ENCODE measurements at regions of chr4 and their contacts with region 1.

Region 1: DNA sequence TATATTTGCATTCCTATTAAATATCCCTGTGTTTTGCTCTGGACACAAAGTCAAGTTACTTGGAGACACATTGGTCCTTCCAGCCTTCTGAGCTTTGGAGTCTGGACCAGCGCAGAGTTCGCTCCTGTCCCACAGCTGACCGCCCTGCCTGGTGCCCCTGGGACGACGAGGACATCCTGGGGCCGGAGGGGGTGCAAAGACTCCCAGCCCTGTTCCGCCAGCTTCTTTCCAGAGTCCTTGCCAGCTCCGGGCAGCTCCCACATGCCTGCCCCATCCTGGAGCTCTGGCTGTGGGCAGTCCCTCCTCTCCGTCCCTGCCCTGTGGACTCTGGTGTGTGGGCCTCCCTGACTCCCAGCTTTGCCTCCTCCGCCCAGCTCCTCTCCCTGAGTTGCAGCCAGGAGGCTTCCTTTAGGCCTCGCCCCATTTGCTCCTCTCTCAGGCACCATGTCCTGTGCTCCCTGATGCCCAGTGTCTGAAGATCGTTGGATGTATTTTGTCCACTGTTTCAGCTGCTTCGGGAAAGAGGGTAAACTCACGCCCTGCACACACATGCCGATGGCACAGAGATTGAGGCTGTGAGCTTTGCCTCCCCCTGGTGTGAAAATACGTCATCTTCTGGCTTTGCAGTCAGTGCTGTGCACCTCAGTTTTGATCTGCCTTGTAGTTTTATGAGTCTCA is 4.9 kb upstream of the PCGF3 start:
- DNase-seq: no peak
- ATAC-seq: no peak
- H3K4me3 ChIP-seq: no peak overlapping the region
- H3K27ac ChIP-seq: no peak overlapping the region
- H3K4me1 ChIP-seq: peaks cover 5% of the 10 kb centered on the region; the same call in 1 of the 2 replicates
- H3K27me3 ChIP-seq: peaks cover 8% of the 10 kb centered on the region
- CTCF ChIP-seq: no peak
- POLR2A ChIP-seq: no peak
- RAD21 ChIP-seq: no peak

Region 2: GRCh38 chr4:422587-422986 is 278.1 kb before region 1 on chr4:
- CTCF ChIA-PET with region 1: no interaction called
- POLR2A ChIA-PET with region 1: no interaction called
- dilution Hi-C with region 1: no loop called
- in situ Hi-C with region 1: no loop called
- intact Hi-C with region 1: no loop called
- DNase-seq: no peak
- ATAC-seq: no peak
- H3K4me3 ChIP-seq: no peak overlapping the region
- H3K27ac ChIP-seq: no peak overlapping the region
- H3K4me1 ChIP-seq: no peaks in the 10 kb centered on the region
- H3K27me3 ChIP-seq: no peaks in the 10 kb centered on the region
- CTCF ChIP-seq: no peak
- POLR2A ChIP-seq: no peak
- RAD21 ChIP-seq: no peak

Region 3: GRCh38 chr4:575281-576141 is 125.2 kb before region 1 on chr4:
- CTCF ChIA-PET with region 1: no interaction called
- POLR2A ChIA-PET with region 1: no interaction called
- dilution Hi-C with region 1: no loop called
- in situ Hi-C with region 1: no loop called
- intact Hi-C with region 1: no loop called
- DNase-seq: peak; percentile 44
- ATAC-seq: peak; percentile 88
- H3K4me3 ChIP-seq: no peak overlapping the region
- H3K27ac ChIP-seq: no peak overlapping the region
- H3K4me1 ChIP-seq: no peaks in the 10 kb centered on the region; the same call in 1 of the 2 replicates
- H3K27me3 ChIP-seq: peaks cover 58% of the 10 kb centered on the region
- CTCF ChIP-seq: no peak
- POLR2A ChIP-seq: no peak
- RAD21 ChIP-seq: no peak

Region 4: DNA sequence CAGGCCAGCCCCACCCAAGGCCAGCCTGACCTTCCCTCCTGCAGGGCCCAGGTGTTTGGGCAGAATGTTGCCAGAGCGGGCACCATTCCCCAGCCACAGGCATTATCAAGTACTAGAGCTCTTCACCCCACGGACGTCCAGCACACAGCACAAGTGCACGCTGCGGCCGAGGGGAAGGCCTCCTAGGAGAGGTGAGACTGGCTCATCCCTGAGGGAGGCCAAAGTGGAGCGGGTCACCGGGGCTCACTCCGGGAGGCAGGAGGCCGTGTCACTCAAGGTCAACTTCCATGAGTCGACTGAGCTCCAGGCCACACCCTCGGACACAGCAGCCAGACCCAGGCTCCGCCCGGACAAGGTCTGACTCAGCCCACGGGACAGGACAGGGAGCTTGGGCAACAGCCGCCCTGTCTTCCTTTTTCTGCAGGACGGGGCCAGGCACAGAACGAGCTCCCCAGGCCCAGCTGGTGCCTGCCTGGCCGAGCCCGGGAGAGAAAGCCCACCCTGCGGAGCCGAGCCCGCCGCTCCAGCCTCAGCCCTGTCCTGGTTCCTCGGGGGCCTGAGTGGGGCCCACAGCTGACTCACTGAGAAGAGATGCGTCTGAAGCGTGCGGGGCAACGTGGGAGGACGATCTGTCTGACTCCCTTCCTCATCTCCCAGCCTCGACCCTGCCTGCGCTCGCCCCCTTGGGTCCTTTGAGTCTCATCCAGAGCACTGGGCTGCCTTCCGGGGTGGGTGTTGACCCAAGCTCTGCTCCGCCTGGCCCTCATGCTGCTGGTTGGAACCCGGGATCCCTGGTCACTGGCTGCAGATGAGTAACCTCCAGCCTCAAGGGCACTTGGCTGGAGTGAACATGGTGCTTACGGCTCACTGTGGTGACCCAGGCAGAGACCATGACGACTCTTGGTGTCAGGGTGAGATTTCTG is 13.4 kb before region 1 on chr4:
- CTCF ChIA-PET with region 1: interaction called, 3 read pairs
- POLR2A ChIA-PET with region 1: interaction called, 11 read pairs
- dilution Hi-C with region 1: no loop called
- in situ Hi-C with region 1: no loop called
- intact Hi-C with region 1: no loop called
- DNase-seq: peak; percentile 77
- ATAC-seq: peak; percentile 78
- H3K4me3 ChIP-seq: no peak overlapping the region
- H3K27ac ChIP-seq: peak overlapping the region; percentile 11; the same call in 1 of the 2 replicates
- H3K4me1 ChIP-seq: peaks cover 12% of the 10 kb centered on the region
- H3K27me3 ChIP-seq: peaks cover 5% of the 10 kb centered on the region; the same call in 1 of the 2 replicates
- CTCF ChIP-seq: no peak
- POLR2A ChIP-seq: no peak
- RAD21 ChIP-seq: no peak

Region 5: GRCh38 chr4:896216-896615 is 195.5 kb after region 1 on chr4:
- CTCF ChIA-PET with region 1: no interaction called
- POLR2A ChIA-PET with region 1: no interaction called
- dilution Hi-C with region 1: no loop called
- in situ Hi-C with region 1: no loop called
- intact Hi-C with region 1: no loop called
- DNase-seq: no peak
- ATAC-seq: no peak
- H3K4me3 ChIP-seq: no peak overlapping the region
- H3K27ac ChIP-seq: no peak overlapping the region
- H3K4me1 ChIP-seq: no peaks in the 10 kb centered on the region
- H3K27me3 ChIP-seq: no peaks in the 10 kb centered on the region
- CTCF ChIP-seq: no peak
- POLR2A ChIP-seq: no peak
- RAD21 ChIP-seq: no peak

Region 6: DNA sequence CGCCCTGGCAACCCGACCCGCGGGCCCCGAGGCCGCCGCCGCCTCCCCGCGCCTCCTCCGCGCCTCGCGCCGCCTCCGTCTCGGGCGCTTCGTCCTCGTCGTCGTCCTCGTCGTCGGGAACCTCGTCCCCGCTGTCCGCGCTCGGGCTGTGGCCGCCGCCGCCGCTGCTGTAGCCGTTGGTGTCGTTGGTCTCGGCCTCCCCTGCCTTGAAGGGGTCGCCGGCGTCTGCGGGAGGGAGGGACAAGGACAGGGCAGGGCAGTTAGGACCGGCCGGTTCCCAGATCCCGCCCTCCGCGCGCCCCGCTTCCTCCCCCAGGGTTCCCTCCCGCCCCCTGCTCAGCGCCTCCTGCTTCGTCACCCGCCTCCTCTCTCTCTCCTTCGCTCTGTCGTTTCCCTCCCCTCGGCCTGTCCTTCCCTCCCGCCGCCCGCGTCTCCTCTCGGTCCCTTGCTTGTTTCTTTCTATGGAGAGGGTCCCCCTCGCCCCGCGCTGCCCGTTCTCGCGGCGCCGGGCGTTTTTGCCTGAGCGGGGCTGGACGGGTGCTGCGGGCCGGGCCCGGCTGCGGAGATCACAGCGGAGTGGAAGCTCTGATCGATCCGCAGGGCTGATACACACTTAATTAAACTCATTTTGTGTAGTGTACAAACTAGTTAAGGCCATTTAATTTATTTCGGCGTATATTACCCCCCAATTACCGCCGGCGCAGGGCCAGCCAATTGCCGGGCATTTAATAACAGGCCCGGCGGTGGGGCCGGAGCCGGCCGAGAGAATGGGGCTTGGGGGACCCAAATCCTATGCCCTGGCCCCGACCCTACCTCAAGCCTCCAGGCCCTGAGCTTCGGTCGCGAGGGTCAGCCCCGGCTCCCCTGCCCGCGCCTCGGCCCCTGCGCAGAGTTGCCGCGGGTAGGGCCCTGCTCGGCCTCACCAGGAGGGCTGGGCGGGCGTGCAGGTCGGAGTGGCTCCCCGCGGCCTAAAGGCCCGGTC is 703.2 kb after region 1 on chr4:
- CTCF ChIA-PET with region 1: no interaction called
- POLR2A ChIA-PET with region 1: no interaction called
- dilution Hi-C with region 1: no loop called
- in situ Hi-C with region 1: no loop called
- intact Hi-C with region 1: no loop called
- DNase-seq: no peak
- ATAC-seq: no peak
- H3K4me3 ChIP-seq: no peak overlapping the region
- H3K27ac ChIP-seq: no peak overlapping the region
- H3K4me1 ChIP-seq: no peaks in the 10 kb centered on the region
- H3K27me3 ChIP-seq: peaks cover 84% of the 10 kb centered on the region
- CTCF ChIP-seq: no peak
- POLR2A ChIP-seq: no peak
- RAD21 ChIP-seq: no peak

Measured in IMR-90 (cell line).